ENCODE measurements at regions of chr2 and their contacts with region 1.

Region 1: GRCh38 chr2:152166633-152167032 is 8.9 kb downstream of the STAM2 start:
- DNase-seq: no peak
- H3K4me3 ChIP-seq: no peak overlapping the region
- H3K27ac ChIP-seq: peak overlapping the region in 3 of 4 donors; percentile 15 to 43 (median 42)
- H3K4me1 ChIP-seq: peaks cover 13 to 68% (median 58%) of the 10 kb centered on the region in 4 donors
- H3K27me3 ChIP-seq: no peaks in the 10 kb centered on the region
- CTCF ChIP-seq: no peak
- EP300 ChIP-seq: no peak
- POLR2A ChIP-seq: no peak

Region 2: DNA sequence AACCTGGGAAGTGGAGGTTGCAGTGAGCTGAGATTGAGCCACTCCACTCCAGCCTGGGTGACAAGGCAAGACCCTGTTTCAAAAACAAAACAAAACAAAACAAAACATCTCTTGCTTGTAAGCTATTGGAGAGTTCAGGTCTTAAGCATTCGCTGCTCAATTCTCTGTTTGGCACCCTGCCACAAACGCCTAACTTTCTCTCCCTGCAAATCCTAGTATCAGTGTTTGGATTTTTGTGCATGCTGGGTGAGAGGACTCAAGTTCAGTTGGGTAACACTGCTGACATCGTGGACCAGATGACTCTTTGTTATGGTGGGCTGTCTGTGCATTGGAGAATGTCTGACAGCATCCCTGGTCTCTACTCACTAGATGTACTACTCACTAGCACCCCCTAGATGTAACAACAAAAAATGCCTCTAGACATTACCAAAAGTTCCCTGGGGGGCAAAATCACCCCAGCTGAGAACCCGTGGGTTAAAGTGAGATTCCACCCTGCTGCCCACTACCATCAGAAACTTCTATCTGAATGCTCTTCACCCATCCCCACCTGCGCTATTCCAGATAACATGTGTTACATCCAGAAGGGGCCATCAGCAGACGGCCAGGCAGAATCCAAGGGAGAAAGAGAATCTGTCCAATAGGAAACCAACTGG is 118.7 kb before region 1 on chr2:
- intact Hi-C with region 1: loop called (anchors 5 kb)
- DNase-seq: no peak
- H3K4me3 ChIP-seq: no peak overlapping the region
- H3K27ac ChIP-seq: no peak overlapping the region
- H3K4me1 ChIP-seq: no peaks in the 10 kb centered on the region
- H3K27me3 ChIP-seq: no peaks in the 10 kb centered on the region
- CTCF ChIP-seq: peak in 1 of 3 experiments; percentile 16
- EP300 ChIP-seq: no peak
- POLR2A ChIP-seq: no peak

Region 3: DNA sequence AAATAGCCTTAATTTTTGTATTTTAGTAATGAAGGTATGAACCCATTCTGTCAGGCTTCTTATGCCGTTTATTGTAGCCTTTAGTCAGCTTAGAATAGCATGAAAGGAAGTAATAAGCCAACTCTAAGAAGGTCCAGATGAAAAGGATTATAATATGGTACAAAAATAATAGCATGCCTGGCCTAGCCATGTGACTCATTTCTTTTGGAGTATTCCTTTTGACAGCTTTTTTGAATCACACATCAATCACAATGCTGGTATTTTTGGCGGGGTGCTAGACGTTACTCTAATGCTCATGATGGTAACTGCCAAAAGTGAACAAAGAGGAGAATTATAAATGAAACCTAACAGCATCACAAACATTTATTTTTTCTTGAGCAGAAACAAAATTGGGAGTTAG is 188.3 kb after region 1 on chr2:
- intact Hi-C with region 1: no loop called
- DNase-seq: no peak
- H3K4me3 ChIP-seq: no peak overlapping the region
- H3K27ac ChIP-seq: peak overlapping the region in 1 of 4 donors; percentile 10
- H3K4me1 ChIP-seq: peaks cover 0 to 20% (median 12%) of the 10 kb centered on the region in 4 donors
- H3K27me3 ChIP-seq: no peaks in the 10 kb centered on the region
- CTCF ChIP-seq: no peak
- EP300 ChIP-seq: no peak
- POLR2A ChIP-seq: no peak